CD8-positive, alpha-beta memory T cell (primary cell): ENCODE measurements at regions of chr2 and their contacts with region 1.

Region 1: DNA sequence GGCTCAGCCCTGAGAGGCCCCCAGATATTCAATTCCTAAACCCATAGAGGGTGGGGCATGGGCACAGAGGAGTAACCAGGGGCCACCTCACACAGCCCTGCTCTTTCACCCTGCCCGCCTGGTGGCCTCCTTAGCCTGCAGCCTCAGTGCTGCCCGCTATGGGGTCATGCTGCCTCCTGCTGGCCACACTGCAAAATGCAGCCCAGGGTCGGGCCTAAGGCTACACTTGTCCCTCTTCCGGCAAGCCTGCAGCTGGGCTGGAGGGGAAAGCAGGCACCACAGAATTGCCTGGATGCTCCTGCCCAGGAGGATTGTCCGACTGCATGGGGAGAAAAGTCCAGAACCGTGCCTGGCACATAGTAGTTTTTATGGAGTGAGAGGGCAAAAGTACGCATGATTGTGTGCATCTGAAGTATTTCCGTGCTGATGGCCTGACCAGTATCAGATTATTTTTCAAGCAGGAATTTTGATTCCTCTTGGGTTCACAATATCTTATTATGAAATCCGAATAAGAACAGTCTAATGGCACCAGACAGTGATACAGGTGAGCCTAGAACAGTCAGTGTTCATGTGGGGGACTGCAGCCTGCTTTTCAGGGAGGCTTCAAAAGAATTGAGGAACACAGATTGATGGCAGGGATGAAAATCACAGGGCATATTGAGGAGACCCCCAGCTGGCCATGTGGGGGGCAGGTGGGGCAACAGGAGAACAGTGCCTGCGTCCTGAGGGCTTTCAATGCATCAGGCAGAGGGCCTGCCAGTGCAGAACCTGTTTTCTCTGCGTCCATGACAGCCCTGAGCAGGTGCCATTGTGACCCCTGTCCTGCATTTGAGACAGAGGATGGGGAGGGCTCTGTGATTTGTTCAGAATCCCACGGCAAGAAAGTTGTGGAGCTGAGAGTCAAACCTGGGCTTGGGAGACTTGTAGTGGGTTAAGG is 51.2 kb upstream of the ALPP start:
- DNase-seq: peak; percentile 71 to 85 (median 74)
- H3K4me3 ChIP-seq: no peak overlapping the region
- H3K4me3 Mint-ChIP-seq: no peak overlapping the region
- H3K27ac ChIP-seq: no peak overlapping the region
- H3K27ac Mint-ChIP-seq: peak overlapping the region in 2 of 8 donors; percentile 70 to 77
- H3K4me1 ChIP-seq: peaks cover 18% of the 10 kb centered on the region
- H3K4me1 Mint-ChIP-seq: peaks cover 6 to 17% (median 10%) of the 10 kb centered on the region in 3 donors
- H3K27me3 ChIP-seq: no peaks in the 10 kb centered on the region
- H3K27me3 Mint-ChIP-seq: no peaks in the 10 kb centered on the region

Region 2: GRCh38 chr2:231900486-231900942 is 426.9 kb before region 1 on chr2:
- CTCF ChIA-PET with region 1: interaction called, 24 read pairs
- POLR2A ChIA-PET with region 1: no interaction called
- DNase-seq: peak in 4 of 5 donors; percentile 2 to 36 (median 19)
- H3K4me3 ChIP-seq: no peak overlapping the region
- H3K4me3 Mint-ChIP-seq: no peak overlapping the region
- H3K27ac ChIP-seq: no peak overlapping the region
- H3K27ac Mint-ChIP-seq: no peak overlapping the region
- H3K4me1 ChIP-seq: no peaks in the 10 kb centered on the region
- H3K4me1 Mint-ChIP-seq: no peaks in the 10 kb centered on the region
- H3K27me3 ChIP-seq: no peaks in the 10 kb centered on the region
- H3K27me3 Mint-ChIP-seq: peaks cover 2 to 3% of the 10 kb centered on the region in 2 donors

Region 3: GRCh38 chr2:231925303-231926179 is 401.8 kb before region 1 on chr2:
- CTCF ChIA-PET with region 1: interaction called, 26 read pairs
- POLR2A ChIA-PET with region 1: no interaction called
- DNase-seq: peak; percentile 43 to 69 (median 58)
- H3K4me3 ChIP-seq: peak overlapping the region; percentile 41
- H3K4me3 Mint-ChIP-seq: peak overlapping the region in 4 of 7 donors; percentile 26 to 59 (median 34)
- H3K27ac ChIP-seq: no peak overlapping the region
- H3K27ac Mint-ChIP-seq: no peak overlapping the region
- H3K4me1 ChIP-seq: peaks cover 11% of the 10 kb centered on the region
- H3K4me1 Mint-ChIP-seq: peaks cover 0 to 17% (median 11%) of the 10 kb centered on the region in 3 donors
- H3K27me3 ChIP-seq: peaks cover 37% of the 10 kb centered on the region
- H3K27me3 Mint-ChIP-seq: peaks cover 28 to 59% of the 10 kb centered on the region in 2 donors

Region 4: DNA sequence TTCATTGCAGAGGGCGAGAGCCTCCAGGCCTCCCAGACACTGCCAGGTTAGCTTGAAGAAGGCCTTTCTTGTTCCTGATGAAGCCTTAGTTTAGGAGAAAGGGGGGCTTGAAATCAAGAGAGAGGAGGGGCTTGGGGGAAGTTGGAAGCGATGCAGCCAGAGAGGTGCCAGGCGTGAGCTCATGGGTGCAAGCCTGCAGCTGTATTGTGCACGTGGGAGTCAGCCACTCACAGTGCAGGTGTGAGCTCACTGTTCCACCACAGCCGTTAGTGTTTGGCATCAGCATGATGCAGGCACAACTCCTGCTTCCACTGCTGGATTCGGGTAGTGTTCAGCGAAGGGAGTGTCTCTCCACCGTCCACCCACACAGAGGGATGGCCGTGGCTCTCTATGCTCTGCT is 17.3 kb before region 1 on chr2:
- CTCF ChIA-PET with region 1: interaction called, 36 read pairs
- POLR2A ChIA-PET with region 1: no interaction called
- DNase-seq: peak in 4 of 5 donors; percentile 20 to 77 (median 46)
- H3K4me3 ChIP-seq: peak overlapping the region; percentile 11
- H3K4me3 Mint-ChIP-seq: peak overlapping the region in 6 of 7 donors; percentile 69 to 90 (median 74)
- H3K27ac ChIP-seq: peak overlapping the region; percentile 55
- H3K27ac Mint-ChIP-seq: peak overlapping the region; percentile 83 to 97 (median 94)
- H3K4me1 ChIP-seq: peaks cover 58% of the 10 kb centered on the region
- H3K4me1 Mint-ChIP-seq: peaks cover 71 to 85% (median 79%) of the 10 kb centered on the region in 3 donors
- H3K27me3 ChIP-seq: no peaks in the 10 kb centered on the region
- H3K27me3 Mint-ChIP-seq: no peaks in the 10 kb centered on the region

Region 5: DNA sequence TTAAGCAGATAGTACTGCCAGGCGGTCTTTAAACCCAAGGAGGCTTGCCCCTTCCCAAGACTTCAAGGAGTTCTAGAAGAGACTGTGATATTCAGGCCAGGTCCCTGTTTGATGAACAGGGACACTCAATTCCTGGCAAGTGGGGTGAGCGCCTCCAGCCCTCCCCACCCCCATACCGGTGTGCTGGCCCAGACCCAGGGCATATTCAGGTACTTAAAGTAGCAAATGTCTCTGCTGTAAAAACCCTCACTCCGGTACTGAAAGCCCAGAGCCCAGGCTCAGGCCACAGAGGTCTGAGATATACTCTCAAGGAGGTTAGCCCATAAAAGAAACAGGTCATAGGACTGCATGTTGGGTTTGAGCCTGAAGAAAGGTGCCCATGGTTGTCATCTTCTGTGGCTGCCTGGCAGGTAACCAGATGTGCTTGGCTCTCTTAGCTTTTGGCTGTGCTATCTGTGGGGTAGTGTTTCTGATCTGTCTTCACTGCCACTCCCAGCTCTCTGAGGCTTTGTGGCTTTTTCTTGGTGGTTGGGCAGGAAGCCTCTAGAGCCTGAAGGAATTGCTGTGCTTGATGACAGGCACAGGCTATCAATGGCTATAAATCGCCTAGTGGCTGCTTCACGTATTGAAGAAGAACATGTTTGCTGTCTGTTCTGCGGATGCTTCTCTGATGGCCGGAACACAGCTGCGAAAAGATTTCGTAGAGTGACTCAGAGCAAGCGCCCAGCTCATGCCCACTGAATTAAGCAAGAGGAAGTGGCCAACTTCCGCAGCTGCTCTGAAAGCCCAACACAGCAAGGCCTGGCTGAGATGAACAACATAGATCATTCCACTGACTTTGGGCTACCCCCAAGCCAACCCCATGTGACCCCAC is 12.1 kb before region 1 on chr2:
- CTCF ChIA-PET with region 1: interaction called, 36 read pairs
- POLR2A ChIA-PET with region 1: no interaction called
- DNase-seq: peak; percentile 57 to 86 (median 81)
- H3K4me3 ChIP-seq: peak overlapping the region; percentile 41
- H3K4me3 Mint-ChIP-seq: peak overlapping the region; percentile 1 to 88 (median 77)
- H3K27ac ChIP-seq: peak overlapping the region; percentile 22
- H3K27ac Mint-ChIP-seq: peak overlapping the region; percentile 85 to 97 (median 93)
- H3K4me1 ChIP-seq: peaks cover 90% of the 10 kb centered on the region
- H3K4me1 Mint-ChIP-seq: peaks cover 80 to 96% (median 96%) of the 10 kb centered on the region in 3 donors
- H3K27me3 ChIP-seq: no peaks in the 10 kb centered on the region
- H3K27me3 Mint-ChIP-seq: no peaks in the 10 kb centered on the region

Region 6: GRCh38 chr2:232339121-232340081 is 12.0 kb after region 1 on chr2:
- CTCF ChIA-PET with region 1: no interaction called
- POLR2A ChIA-PET with region 1: no interaction called
- DNase-seq: peak in 1 of 5 donors; percentile 41
- H3K4me3 ChIP-seq: no peak overlapping the region
- H3K4me3 Mint-ChIP-seq: no peak overlapping the region
- H3K27ac ChIP-seq: no peak overlapping the region
- H3K27ac Mint-ChIP-seq: peak overlapping the region in 2 of 8 donors; percentile 14 to 17
- H3K4me1 ChIP-seq: no peaks in the 10 kb centered on the region
- H3K4me1 Mint-ChIP-seq: no peaks in the 10 kb centered on the region
- H3K27me3 ChIP-seq: no peaks in the 10 kb centered on the region
- H3K27me3 Mint-ChIP-seq: peaks cover 0 to 2% of the 10 kb centered on the region in 2 donors